ENCODE measurements at regions of chr20 and their contacts with region 1.

Region 1: GRCh38 chr20:39049684-39050554 is 87.8 kb downstream of the DHX35 start:
- DNase-seq: peak; percentile 88
- CTCF ChIP-seq: peak; percentile 99

Region 2: GRCh38 chr20:38926142-38926933 is 123.6 kb before region 1 on chr20 and contains the start of gene FAM83D:
- CTCF ChIA-PET with region 1: interaction called, 212 read pairs
- POLR2A ChIA-PET with region 1: interaction called, 5 read pairs
- DNase-seq: peak; percentile 100
- CTCF ChIP-seq: no peak

Region 3: DNA sequence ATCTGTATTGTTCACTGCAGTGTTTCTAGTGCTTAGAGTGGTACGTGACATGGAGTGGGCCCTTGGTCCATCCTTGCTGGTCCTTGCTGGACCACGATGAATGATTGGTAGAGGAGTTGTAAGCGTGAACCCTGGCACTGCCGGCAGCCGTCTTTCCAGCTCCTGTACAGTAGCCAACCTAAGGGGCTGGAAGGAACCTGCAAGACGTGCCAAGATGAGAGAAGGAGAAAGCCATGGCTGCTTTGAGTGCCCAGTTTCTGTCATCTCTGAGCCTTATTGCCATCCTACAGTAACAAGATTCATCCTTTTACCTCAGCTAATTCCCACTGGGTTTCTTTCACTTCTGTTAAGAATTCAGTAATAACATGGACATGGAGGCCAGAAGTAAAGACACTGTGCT is 81.8 kb before region 1 on chr20:
- CTCF ChIA-PET with region 1: interaction called, 16 read pairs
- POLR2A ChIA-PET with region 1: no interaction called
- DNase-seq: no peak
- CTCF ChIP-seq: no peak

Region 4: DNA sequence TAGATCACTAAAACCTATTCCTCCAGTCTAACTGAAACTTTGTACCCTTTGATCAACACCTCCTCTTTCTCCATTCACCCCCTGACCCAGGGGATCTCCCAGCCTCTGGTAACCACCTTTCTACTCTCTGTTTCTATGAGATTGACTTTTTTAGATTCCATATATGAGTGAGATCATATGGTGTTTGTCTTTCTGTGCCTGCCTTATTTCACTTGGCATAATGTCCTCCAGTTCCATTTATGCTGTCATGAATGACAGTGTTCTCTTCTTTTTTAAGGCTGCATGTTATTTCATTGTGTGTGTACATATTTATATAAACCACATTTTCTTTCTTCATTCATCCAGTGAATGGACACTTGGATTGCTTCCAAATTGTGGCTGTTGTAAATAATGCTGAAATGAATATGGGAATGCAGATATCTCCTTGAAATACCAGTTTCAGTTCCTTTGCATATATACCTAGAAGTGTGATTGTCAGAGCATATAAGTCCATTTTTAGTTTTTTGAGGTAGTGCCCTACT is 30.1 kb before region 1 on chr20:
- CTCF ChIA-PET with region 1: interaction called, 214 read pairs
- POLR2A ChIA-PET with region 1: no interaction called
- DNase-seq: no peak
- CTCF ChIP-seq: no peak

Region 5: DNA sequence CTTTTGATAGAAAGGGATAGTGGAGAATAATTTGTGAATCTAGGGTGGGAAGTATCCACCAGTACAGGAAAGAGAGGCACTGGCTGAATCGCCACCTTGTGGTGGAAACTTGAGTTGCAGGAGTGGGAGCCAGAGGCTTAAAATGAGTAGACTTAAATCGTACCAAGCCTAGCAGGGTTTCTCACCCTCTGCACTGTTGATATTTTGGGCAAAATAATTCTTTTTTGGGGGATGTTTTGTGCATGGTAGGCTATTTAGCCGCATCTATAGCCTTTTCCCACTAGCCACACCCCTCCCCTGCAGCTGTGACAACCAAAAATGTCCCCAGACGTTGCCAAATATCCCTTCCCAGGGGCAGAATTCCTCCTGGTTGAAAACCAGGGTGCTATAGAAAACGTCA is 31.3 kb after region 1 on chr20:
- CTCF ChIA-PET with region 1: interaction called, 136 read pairs
- POLR2A ChIA-PET with region 1: no interaction called
- DNase-seq: peak; percentile 80
- CTCF ChIP-seq: peak; percentile 86

Region 6: GRCh38 chr20:39259010-39259803 is 209.3 kb after region 1 on chr20:
- CTCF ChIA-PET with region 1: no interaction called
- POLR2A ChIA-PET with region 1: no interaction called
- DNase-seq: no peak
- CTCF ChIP-seq: no peak